Astrocyte of the cerebellum (primary cell): ENCODE measurements at regions of chr6 and their contacts with region 1.

Region 1: DNA sequence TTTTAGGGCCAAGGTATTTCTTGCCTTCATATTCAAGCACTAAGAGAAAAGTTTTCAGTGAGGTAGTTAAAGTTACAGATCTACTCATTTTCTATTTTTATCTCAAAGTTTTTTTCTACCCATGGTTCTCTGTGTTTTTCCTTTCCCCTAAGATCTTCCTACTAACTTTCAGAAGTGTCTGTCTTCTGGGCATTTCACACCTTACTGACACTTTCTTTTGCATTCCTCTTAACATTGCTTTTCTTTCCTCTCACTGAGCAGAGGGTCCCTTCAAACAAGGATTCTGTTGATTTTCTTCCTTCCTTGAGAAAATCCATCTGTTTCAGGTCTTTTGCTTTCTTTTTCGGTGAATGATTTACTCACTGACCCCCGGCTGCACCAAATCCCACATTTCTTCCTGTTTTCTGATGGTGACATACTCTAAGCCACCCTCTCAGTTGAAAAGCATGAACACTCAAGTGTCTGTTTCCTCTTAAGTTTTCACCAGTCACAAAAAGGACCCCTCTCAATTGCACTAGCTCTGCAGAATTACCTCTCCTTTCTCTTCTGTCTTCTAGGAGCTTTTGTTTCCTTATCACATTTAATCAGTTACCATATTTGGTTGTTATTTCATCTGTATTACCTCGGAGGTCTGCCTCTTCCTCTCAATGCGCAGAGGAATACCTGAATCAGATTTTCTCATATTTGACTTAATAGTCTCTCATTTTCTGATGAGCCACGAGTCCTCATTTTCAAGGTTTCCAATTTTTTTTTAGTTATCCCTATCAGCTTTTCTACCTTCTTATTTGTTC is 73.5 kb upstream of the RNF217 start:
- DNase-seq: no peak
- H3K4me3 ChIP-seq: no peak overlapping the region
- CTCF ChIP-seq: no peak

Region 2: GRCh38 chr6:123909989-123910388 is 978.8 kb before region 1 on chr6:
- in situ Hi-C with region 1: no loop called
- DNase-seq: no peak
- H3K4me3 ChIP-seq: no peak overlapping the region
- CTCF ChIP-seq: no peak

Region 3: GRCh38 chr6:124927806-124928205 is 39.0 kb after region 1 on chr6:
- in situ Hi-C with region 1: loop called (anchors 5 kb)
- DNase-seq: peak; percentile 15
- H3K4me3 ChIP-seq: no peak overlapping the region
- CTCF ChIP-seq: no peak

Region 4: GRCh38 chr6:125570526-125570925 is 681.8 kb after region 1 on chr6:
- in situ Hi-C with region 1: no loop called
- DNase-seq: no peak
- H3K4me3 ChIP-seq: no peak overlapping the region
- CTCF ChIP-seq: no peak